K562 (cell line): ENCODE measurements at regions of chr16 and their contacts with region 1.

Region 1: GRCh38 chr16:68985855-68986254 is 119.6 kb upstream of the HAS3 start:
- DNase-seq: peak; percentile 37 to 57 (median 42)
- ATAC-seq: peak; percentile 34
- H3K4me3 ChIP-seq: no peak overlapping the region
- H3K27ac ChIP-seq: peak overlapping the region; percentile 74
- H3K4me1 ChIP-seq: peaks cover 16 to 42% of the 10 kb centered on the region in 2 experiments
- H3K27me3 ChIP-seq: no peaks in the 10 kb centered on the region
- CTCF ChIP-seq: no peak
- EP300 ChIP-seq: no peak
- POLR2A ChIP-seq: no peak
- RAD21 ChIP-seq: no peak

Region 2: GRCh38 chr16:68770671-68771070 is 215.2 kb before region 1 on chr16:
- CTCF ChIA-PET with region 1: no interaction called
- POLR2A ChIA-PET with region 1: no interaction called
- in situ Hi-C with region 1: no loop called
- intact Hi-C with region 1: no loop called
- DNase-seq: no peak
- ATAC-seq: peak; percentile 35
- H3K4me3 ChIP-seq: no peak overlapping the region
- H3K27ac ChIP-seq: no peak overlapping the region
- H3K4me1 ChIP-seq: peaks cover 10 to 17% of the 10 kb centered on the region in 2 experiments; a peak in 3 of 5 replicates
- H3K27me3 ChIP-seq: no peaks in the 10 kb centered on the region
- CTCF ChIP-seq: no peak
- EP300 ChIP-seq: no peak
- POLR2A ChIP-seq: no peak
- RAD21 ChIP-seq: no peak

Region 3: DNA sequence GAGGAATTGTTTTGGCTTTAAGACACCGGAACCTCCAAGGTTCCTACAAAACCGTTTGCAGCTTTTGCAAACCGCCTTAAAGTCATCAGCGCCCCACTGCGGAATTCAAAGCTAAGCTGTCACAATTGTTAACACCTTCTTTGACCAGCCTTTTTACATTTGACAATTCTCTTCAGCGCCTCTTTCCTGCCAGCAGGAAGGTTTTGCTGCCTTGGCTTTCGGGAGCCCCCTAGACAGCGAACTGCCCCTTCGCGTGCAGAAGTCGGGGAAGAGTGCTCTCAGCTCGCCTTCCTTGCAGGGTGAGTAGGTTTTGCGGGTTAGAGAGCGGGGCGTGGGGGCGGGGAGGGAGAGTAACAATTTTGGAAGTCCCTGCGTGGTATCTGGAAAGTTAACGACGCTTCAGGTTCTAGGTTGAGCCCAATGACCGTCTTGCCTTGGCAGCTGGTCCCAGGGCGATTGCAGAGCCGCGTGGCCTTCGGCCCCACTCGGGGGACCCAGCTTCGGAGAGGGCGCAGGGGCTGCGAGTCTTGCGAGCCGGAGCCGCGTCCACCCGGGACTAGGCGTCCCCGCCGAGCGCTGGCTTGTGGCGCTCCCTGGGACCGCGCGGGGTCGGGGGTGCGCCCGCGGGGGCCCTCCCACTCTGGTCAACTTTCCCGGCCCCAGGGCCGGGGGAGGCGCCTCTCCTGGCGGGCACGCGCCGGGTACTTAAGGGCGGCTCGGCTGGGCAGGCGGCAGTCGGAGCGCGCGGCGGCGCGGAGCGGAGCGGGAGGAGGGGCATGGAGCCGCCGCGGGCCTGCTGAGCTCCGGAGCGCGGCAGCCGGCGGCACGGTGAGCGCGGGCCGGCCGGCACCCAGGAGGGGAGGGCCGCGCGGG is 119.9 kb after region 1 on chr16 and contains the start of gene HAS3:
- CTCF ChIA-PET with region 1: no interaction called
- POLR2A ChIA-PET with region 1: interaction called, 3 read pairs
- in situ Hi-C with region 1: no loop called
- intact Hi-C with region 1: loop called (anchors 5 kb)
- DNase-seq: peak; percentile 61 to 85 (median 79)
- ATAC-seq: peak; percentile 87
- H3K4me3 ChIP-seq: peak within 1 kb of the TSS; percentile 65
- H3K27ac ChIP-seq: no peak within 1 kb of the TSS; the same call in 2 of the 3 replicates
- H3K4me1 ChIP-seq: peaks cover 0 to 25% of the 10 kb centered on the region in 2 experiments; a peak in 3 of 5 replicates
- H3K27me3 ChIP-seq: peaks cover 2 to 8% of the 10 kb centered on the region in 2 experiments; a peak in 1 of 5 replicates
- CTCF ChIP-seq: peak; percentile 60 to 89 (median 71)
- EP300 ChIP-seq: no peak
- POLR2A ChIP-seq: no peak
- RAD21 ChIP-seq: peak; percentile 69 to 88
- polyA plus RNA-seq, gene HAS3: 0.04 TPM in 1 of 2 experiments, not detected in the other